Panc1 (cell line): ENCODE measurements at regions of chr10 and their contacts with region 1.

Region 1: GRCh38 chr10:15097011-15097812 is at the start of gene RPP38:
- DNase-seq: peak; percentile 64
- ATAC-seq: peak; percentile 93
- H3K4me3 ChIP-seq: peak within 1 kb of the TSS; percentile 76 to 90
- H3K27ac ChIP-seq: peak within 1 kb of the TSS; percentile 92
- H3K4me1 ChIP-seq: peaks cover 13% of the 10 kb centered on the region; the same call in 1 of the 2 replicates
- H3K27me3 ChIP-seq: no peaks in the 10 kb centered on the region
- CTCF ChIP-seq: no peak
- total RNA-seq, gene RPP38: 19.9 TPM

Region 2: GRCh38 chr10:14889318-14889717 is 207.9 kb before region 1 on chr10:
- CTCF ChIA-PET with region 1: no interaction called
- POLR2A ChIA-PET with region 1: no interaction called
- in situ Hi-C with region 1: no loop called
- intact Hi-C with region 1: no loop called
- DNase-seq: no peak
- ATAC-seq: no peak
- H3K4me3 ChIP-seq: no peak overlapping the region
- H3K27ac ChIP-seq: no peak overlapping the region
- H3K4me1 ChIP-seq: no peaks in the 10 kb centered on the region
- H3K27me3 ChIP-seq: no peaks in the 10 kb centered on the region
- CTCF ChIP-seq: peak; percentile 31; the same call in 1 of the 2 replicates

Region 3: GRCh38 chr10:15046626-15047025 is 50.6 kb before region 1 on chr10:
- CTCF ChIA-PET with region 1: no interaction called
- POLR2A ChIA-PET with region 1: no interaction called
- in situ Hi-C with region 1: no loop called
- intact Hi-C with region 1: no loop called
- DNase-seq: no peak
- ATAC-seq: no peak
- H3K4me3 ChIP-seq: no peak overlapping the region
- H3K27ac ChIP-seq: no peak overlapping the region
- H3K4me1 ChIP-seq: no peaks in the 10 kb centered on the region
- H3K27me3 ChIP-seq: no peaks in the 10 kb centered on the region
- CTCF ChIP-seq: no peak

Region 4: GRCh38 chr10:15122477-15123030 is 25.3 kb after region 1 on chr10:
- CTCF ChIA-PET with region 1: no interaction called
- POLR2A ChIA-PET with region 1: interaction called, 13 read pairs
- in situ Hi-C with region 1: no loop called
- intact Hi-C with region 1: no loop called
- DNase-seq: no peak
- ATAC-seq: no peak
- H3K4me3 ChIP-seq: no peak overlapping the region
- H3K27ac ChIP-seq: no peak overlapping the region
- H3K4me1 ChIP-seq: no peaks in the 10 kb centered on the region
- H3K27me3 ChIP-seq: no peaks in the 10 kb centered on the region
- CTCF ChIP-seq: no peak

Region 5: GRCh38 chr10:15168781-15169554 is 71.8 kb after region 1 on chr10:
- CTCF ChIA-PET with region 1: no interaction called
- POLR2A ChIA-PET with region 1: no interaction called
- in situ Hi-C with region 1: no loop called
- intact Hi-C with region 1: no loop called
- DNase-seq: no peak
- ATAC-seq: peak; percentile 85
- H3K4me3 ChIP-seq: peak overlapping the region; percentile 17 to 35; a peak in 2 of 4 replicates
- H3K27ac ChIP-seq: peak overlapping the region; percentile 48; the same call in 1 of the 2 replicates
- H3K4me1 ChIP-seq: peaks cover 16% of the 10 kb centered on the region
- H3K27me3 ChIP-seq: no peaks in the 10 kb centered on the region
- CTCF ChIP-seq: no peak

Region 6: GRCh38 chr10:15209827-15210509 is 112.8 kb after region 1 on chr10:
- CTCF ChIA-PET with region 1: no interaction called
- POLR2A ChIA-PET with region 1: interaction called, 10 read pairs
- in situ Hi-C with region 1: no loop called
- intact Hi-C with region 1: no loop called
- DNase-seq: peak; percentile 48
- ATAC-seq: peak; percentile 94
- H3K4me3 ChIP-seq: no peak overlapping the region
- H3K27ac ChIP-seq: no peak overlapping the region
- H3K4me1 ChIP-seq: no peaks in the 10 kb centered on the region
- H3K27me3 ChIP-seq: no peaks in the 10 kb centered on the region
- CTCF ChIP-seq: peak; percentile 88

Region 7: DNA sequence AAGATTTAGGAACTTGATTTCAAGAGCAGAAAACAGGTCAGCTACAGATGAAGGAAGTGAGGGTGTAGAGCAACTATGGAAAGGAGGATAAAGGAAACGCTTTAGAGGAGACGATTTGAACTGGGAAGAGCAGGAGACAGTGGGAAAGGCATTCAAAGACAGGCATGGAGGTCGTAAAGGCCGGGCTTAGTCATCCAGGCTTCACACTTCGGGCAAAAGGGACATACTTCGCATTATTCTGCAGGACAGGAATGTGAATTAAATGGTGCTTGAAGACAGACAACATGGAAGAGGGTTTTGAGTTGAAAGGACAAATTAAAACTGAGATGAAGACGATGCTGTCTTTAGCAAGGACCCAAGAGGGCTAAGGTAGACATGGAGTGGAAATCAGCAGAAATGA is 265.8 kb after region 1 on chr10:
- CTCF ChIA-PET with region 1: no interaction called
- POLR2A ChIA-PET with region 1: interaction called, 10 read pairs
- in situ Hi-C with region 1: no loop called
- intact Hi-C with region 1: no loop called
- DNase-seq: no peak
- ATAC-seq: no peak
- H3K4me3 ChIP-seq: no peak overlapping the region
- H3K27ac ChIP-seq: no peak overlapping the region
- H3K4me1 ChIP-seq: peaks cover 6% of the 10 kb centered on the region
- H3K27me3 ChIP-seq: no peaks in the 10 kb centered on the region
- CTCF ChIP-seq: no peak